Naive thymus-derived CD4-positive, alpha-beta T cell (primary cell): ENCODE measurements at regions of chr19 and their contacts with region 1.

Region 1: GRCh38 chr19:44002566-44003460 is at the start of gene ZNF230:
- DNase-seq: peak; percentile 50 to 85 (median 77)
- ATAC-seq: peak; percentile 99
- H3K4me3 ChIP-seq: peak within 1 kb of the TSS; percentile 88
- H3K4me3 Mint-ChIP-seq: peak within 1 kb of the TSS; percentile 96 to 100 (median 99)
- H3K27ac ChIP-seq: peak within 1 kb of the TSS; percentile 80
- H3K27ac Mint-ChIP-seq: peak within 1 kb of the TSS; percentile 87 to 98 (median 95)
- H3K4me1 ChIP-seq: peaks cover 0 to 8% of the 10 kb centered on the region in 2 donors
- H3K4me1 Mint-ChIP-seq: peaks cover 15 to 32% (median 20%) of the 10 kb centered on the region in 7 donors
- H3K27me3 ChIP-seq: no peaks in the 10 kb centered on the region
- H3K27me3 Mint-ChIP-seq: peaks cover 0 to 2% (median 0%) of the 10 kb centered on the region in 5 donors
- total RNA-seq, gene ZNF230: 2.7 to 18.1 (median 6.7) TPM

Region 2: DNA sequence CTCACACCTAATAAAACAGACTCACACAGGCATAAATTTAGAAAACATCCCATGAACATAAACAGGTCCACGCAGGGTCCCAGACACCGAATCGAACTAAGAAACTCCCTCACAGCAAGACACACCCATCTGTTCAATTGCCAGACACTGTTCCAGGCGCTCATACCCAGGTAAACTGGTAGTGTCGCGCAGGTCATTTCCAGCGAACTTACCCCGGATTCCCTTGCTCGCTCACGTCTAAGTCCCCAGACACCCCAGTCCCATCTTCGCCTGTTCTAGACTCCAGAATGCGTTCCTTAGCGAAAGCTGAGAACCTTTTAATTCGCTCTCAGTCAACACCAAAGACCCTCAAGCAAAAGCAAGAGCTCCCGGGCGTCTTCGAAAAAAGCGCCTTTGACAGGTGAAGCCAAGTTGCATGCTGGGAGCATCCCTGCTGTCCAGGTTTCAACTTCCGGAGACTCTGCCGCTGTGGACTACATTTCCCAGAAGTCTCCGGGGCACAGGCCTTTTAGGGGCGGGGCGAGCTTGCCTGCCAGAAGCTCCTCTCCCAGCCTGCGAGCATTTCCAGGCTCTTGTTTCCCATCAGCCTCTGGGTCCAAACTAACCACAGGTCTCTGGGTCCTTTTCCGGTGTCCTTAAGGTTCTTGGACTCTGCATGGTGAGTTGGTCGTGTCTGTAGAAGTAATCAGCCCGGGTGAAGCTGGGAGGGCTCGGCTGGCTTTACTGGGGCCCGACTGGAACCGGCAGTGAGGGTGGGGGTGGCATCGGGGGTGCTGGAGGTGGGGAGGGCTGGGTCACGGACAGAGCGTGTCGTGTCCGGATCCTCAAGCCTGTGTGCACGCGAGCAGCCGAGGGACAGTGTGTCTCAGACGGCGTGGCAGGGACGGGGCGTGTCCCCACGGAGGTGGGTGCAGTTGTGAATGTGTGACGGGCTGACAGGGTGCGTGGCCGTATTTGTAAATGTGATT is 175.7 kb before region 1 on chr19 and contains the start of gene ZNF283:
- CTCF ChIA-PET with region 1: no interaction called
- POLR2A ChIA-PET with region 1: no interaction called
- intact Hi-C with region 1: loop called (anchors 1 kb)
- DNase-seq: peak; percentile 60 to 78 (median 74)
- ATAC-seq: peak; percentile 99
- H3K4me3 ChIP-seq: peak within 1 kb of the TSS; percentile 77
- H3K4me3 Mint-ChIP-seq: peak within 1 kb of the TSS; percentile 76 to 93 (median 90)
- H3K27ac ChIP-seq: peak within 1 kb of the TSS; percentile 66
- H3K27ac Mint-ChIP-seq: peak within 1 kb of the TSS; percentile 49 to 86 (median 77)
- H3K4me1 ChIP-seq: peaks cover 4 to 12% of the 10 kb centered on the region in 2 donors
- H3K4me1 Mint-ChIP-seq: peaks cover 16 to 25% (median 21%) of the 10 kb centered on the region in 7 donors
- H3K27me3 ChIP-seq: no peaks in the 10 kb centered on the region
- H3K27me3 Mint-ChIP-seq: peaks cover 1 to 16% (median 9%) of the 10 kb centered on the region in 5 donors
- total RNA-seq, gene ZNF283: 4.3 to 24.4 (median 7.7) TPM

Region 3: DNA sequence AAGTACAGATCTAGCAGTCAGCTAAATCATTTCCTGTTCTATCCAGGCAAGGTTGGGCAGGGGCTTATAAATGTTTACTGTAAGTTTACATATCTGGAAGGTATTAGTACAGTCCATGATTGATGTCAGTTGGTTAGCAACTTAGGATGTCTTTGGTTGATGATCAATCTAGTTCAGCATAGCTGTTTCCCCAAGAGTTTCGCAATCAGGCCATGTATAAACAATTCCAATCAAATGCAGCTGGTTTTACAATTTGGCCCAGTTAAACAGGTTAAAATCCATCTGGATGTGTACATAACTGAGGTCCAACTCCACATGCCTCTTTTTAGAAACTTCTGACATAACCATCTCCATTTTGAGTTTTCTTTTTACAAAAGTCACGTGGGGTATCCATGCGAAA is 44.9 kb before region 1 on chr19:
- CTCF ChIA-PET with region 1: no interaction called
- POLR2A ChIA-PET with region 1: no interaction called
- intact Hi-C with region 1: no loop called
- DNase-seq: no peak
- ATAC-seq: no peak
- H3K4me3 ChIP-seq: no peak overlapping the region
- H3K4me3 Mint-ChIP-seq: no peak overlapping the region
- H3K27ac ChIP-seq: no peak overlapping the region
- H3K27ac Mint-ChIP-seq: no peak overlapping the region
- H3K4me1 ChIP-seq: no peaks in the 10 kb centered on the region
- H3K4me1 Mint-ChIP-seq: no peaks in the 10 kb centered on the region
- H3K27me3 ChIP-seq: no peaks in the 10 kb centered on the region
- H3K27me3 Mint-ChIP-seq: peaks cover 0 to 18% (median 5%) of the 10 kb centered on the region in 5 donors

Region 4: GRCh38 chr19:43983912-43984686 is 18.7 kb before region 1 on chr19 and contains the start of gene ZNF155:
- CTCF ChIA-PET with region 1: no interaction called
- POLR2A ChIA-PET with region 1: no interaction called
- intact Hi-C with region 1: loop called (anchors 1 kb)
- DNase-seq: peak; percentile 46 to 72 (median 64)
- ATAC-seq: peak; percentile 92
- H3K4me3 ChIP-seq: peak within 1 kb of the TSS; percentile 96
- H3K4me3 Mint-ChIP-seq: peak within 1 kb of the TSS; percentile 89 to 99 (median 96)
- H3K27ac ChIP-seq: peak within 1 kb of the TSS; percentile 79
- H3K27ac Mint-ChIP-seq: peak within 1 kb of the TSS; percentile 72 to 97 (median 93)
- H3K4me1 ChIP-seq: peaks cover 0 to 3% of the 10 kb centered on the region in 2 donors
- H3K4me1 Mint-ChIP-seq: peaks cover 0 to 28% (median 14%) of the 10 kb centered on the region in 7 donors
- H3K27me3 ChIP-seq: no peaks in the 10 kb centered on the region
- H3K27me3 Mint-ChIP-seq: no peaks in the 10 kb centered on the region
- total RNA-seq, gene ZNF155: 5.2 to 13.3 (median 9.1) TPM

Region 5: DNA sequence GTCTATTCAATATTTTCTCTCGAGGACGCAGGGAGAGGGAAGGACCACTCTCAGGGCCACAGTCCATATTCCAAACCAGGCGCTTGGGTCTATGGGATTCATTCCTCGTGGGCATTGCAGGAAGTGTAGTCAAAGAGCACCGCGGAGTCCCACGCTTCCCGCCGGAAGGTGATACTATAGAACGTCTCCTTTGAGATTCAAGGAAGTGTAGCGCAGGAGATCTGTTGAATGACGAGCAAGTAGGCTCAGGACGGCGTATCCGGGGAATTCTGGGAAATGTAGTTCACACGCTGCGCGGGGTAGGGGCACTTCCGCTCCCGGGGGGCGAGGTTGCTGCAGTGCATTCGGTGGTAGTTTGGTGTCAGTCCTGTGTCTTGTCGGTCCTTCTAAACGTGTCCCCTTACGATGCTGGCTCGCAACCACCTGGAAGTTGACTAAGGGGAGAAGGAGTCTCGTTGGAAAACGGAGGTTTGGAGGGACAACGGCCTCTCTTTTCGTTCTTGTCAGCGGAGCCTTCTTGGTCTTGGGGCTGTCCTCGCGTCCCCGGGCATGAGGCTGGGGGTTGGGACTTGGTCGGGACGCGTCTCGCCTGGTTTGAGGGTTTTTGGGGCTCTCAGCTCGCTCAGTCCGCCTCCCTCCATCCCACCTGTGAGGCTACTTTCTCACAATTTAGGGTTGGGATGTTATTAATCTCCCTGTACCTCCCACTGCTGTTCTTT is 69.2 kb after region 1 on chr19 and contains the start of gene ZNF284:
- CTCF ChIA-PET with region 1: no interaction called
- POLR2A ChIA-PET with region 1: interaction called, 3 read pairs
- intact Hi-C with region 1: loop called (anchors 1 to 2 kb)
- DNase-seq: peak; percentile 61 to 88 (median 84)
- ATAC-seq: peak; percentile 99
- H3K4me3 ChIP-seq: peak within 1 kb of the TSS; percentile 85
- H3K4me3 Mint-ChIP-seq: peak within 1 kb of the TSS; percentile 88 to 98 (median 92)
- H3K27ac ChIP-seq: peak within 1 kb of the TSS; percentile 63
- H3K27ac Mint-ChIP-seq: peak within 1 kb of the TSS; percentile 47 to 91 (median 75)
- H3K4me1 ChIP-seq: peaks cover 15 to 17% of the 10 kb centered on the region in 2 donors
- H3K4me1 Mint-ChIP-seq: peaks cover 20 to 40% (median 27%) of the 10 kb centered on the region in 7 donors
- H3K27me3 ChIP-seq: no peaks in the 10 kb centered on the region
- H3K27me3 Mint-ChIP-seq: no peaks in the 10 kb centered on the region
- total RNA-seq, gene ZNF284: 1.9 to 4.4 (median 2.4) TPM

Region 6: GRCh38 chr19:44164673-44165512 is 162.1 kb after region 1 on chr19 and contains the start of gene ZNF226:
- CTCF ChIA-PET with region 1: no interaction called
- POLR2A ChIA-PET with region 1: no interaction called
- intact Hi-C with region 1: loop called (anchors 1 kb)
- DNase-seq: peak; percentile 24 to 83 (median 75)
- ATAC-seq: peak; percentile 97
- H3K4me3 ChIP-seq: peak within 1 kb of the TSS; percentile 87
- H3K4me3 Mint-ChIP-seq: peak within 1 kb of the TSS; percentile 97 to 99 (median 98)
- H3K27ac ChIP-seq: peak within 1 kb of the TSS; percentile 78
- H3K27ac Mint-ChIP-seq: peak within 1 kb of the TSS; percentile 84 to 99 (median 97)
- H3K4me1 ChIP-seq: peaks cover 6 to 9% of the 10 kb centered on the region in 2 donors
- H3K4me1 Mint-ChIP-seq: peaks cover 10 to 40% (median 40%) of the 10 kb centered on the region in 7 donors
- H3K27me3 ChIP-seq: no peaks in the 10 kb centered on the region
- H3K27me3 Mint-ChIP-seq: no peaks in the 10 kb centered on the region
- total RNA-seq, gene ZNF226: 14.0 to 59.9 (median 20.3) TPM

Region 7: GRCh38 chr19:44304659-44305193 is 301.9 kb after region 1 on chr19 and contains the start of gene ZNF235:
- CTCF ChIA-PET with region 1: no interaction called
- POLR2A ChIA-PET with region 1: no interaction called
- intact Hi-C with region 1: loop called in 1 of 2 experiments (anchors 1 kb)
- DNase-seq: peak; percentile 17 to 77 (median 59)
- ATAC-seq: peak; percentile 97
- H3K4me3 ChIP-seq: peak within 1 kb of the TSS; percentile 84
- H3K4me3 Mint-ChIP-seq: peak within 1 kb of the TSS; percentile 88 to 96 (median 93)
- H3K27ac ChIP-seq: peak within 1 kb of the TSS; percentile 65
- H3K27ac Mint-ChIP-seq: peak within 1 kb of the TSS; percentile 20 to 82 (median 77)
- H3K4me1 ChIP-seq: peaks cover 10 to 12% of the 10 kb centered on the region in 2 donors
- H3K4me1 Mint-ChIP-seq: peaks cover 5 to 34% (median 27%) of the 10 kb centered on the region in 7 donors
- H3K27me3 ChIP-seq: no peaks in the 10 kb centered on the region
- H3K27me3 Mint-ChIP-seq: peaks cover 0 to 10% (median 0%) of the 10 kb centered on the region in 5 donors
- total RNA-seq, gene ZNF235: 5.5 to 14.3 (median 6.7) TPM